Astrocyte of the cerebellum (primary cell): ENCODE measurements at regions of chr22 and their contacts with region 1.

Region 1: GRCh38 chr22:42769574-42770447 is 49.1 kb upstream of the A4GALT start:
- DNase-seq: peak; percentile 53
- H3K4me3 ChIP-seq: no peak overlapping the region
- CTCF ChIP-seq: no peak

Region 2: DNA sequence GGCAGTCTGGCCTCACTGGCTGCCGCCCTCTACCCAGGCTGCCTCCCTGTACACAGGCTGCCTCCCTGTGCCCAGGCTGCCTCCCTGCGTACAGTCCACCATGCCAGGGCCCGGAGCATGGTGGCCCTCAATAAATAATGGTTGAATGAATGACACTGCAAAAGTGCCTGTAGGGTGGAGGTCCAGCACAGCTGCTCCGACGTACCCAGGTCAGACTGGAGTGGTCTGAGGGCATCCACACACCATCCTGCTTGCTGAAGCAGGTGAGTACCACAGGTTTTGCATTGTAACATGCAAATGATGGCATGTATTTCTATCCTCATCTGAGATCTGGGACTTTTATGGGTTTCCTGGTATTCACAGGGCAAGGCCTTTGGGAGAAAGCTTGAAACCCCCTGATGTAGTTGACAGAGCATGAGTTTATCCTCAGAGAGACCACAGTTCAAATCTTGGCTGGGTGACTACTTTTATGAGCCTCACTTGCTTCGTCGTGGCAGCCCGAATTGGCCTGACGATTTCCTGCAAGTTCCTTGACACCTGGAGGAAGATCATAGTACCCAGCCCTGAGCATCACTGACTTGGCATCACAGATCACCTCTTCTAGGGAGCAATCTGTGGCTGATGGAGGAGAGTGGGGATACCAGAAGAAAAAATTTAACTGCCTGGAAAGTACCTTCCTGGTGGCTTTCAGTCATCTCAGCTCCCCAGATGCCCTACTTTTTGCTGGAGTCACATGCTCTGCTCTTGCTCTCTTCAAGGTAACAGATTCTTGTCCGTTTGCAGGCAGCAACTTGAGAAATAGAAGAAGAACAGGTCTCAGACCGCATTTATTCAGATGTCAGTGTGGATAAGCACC is 104.6 kb before region 1 on chr22:
- in situ Hi-C with region 1: loop called (anchors 5 kb)
- DNase-seq: no peak
- H3K4me3 ChIP-seq: no peak overlapping the region
- CTCF ChIP-seq: no peak

Region 3: DNA sequence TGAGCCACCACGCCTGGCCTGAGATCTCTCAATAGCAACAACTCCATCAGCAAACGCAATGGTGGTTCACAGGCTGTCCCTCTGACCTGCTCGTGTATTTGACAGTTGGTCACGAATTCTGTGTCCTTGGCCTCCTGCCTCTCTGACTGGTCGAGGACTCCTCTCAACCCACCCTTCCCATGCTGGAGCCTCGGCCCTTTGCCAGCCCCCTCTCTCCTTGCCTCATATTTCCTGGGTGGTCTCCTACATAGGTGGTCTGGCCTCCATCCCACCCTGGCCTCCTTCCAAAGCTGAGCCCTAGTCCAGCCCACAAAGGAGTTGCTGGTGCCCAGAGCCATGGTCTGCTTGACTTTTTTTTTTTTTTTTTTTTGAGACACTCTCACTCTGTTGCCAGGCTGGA is 37.7 kb before region 1 on chr22:
- in situ Hi-C with region 1: no loop called
- DNase-seq: no peak
- H3K4me3 ChIP-seq: no peak overlapping the region
- CTCF ChIP-seq: no peak

Region 4: DNA sequence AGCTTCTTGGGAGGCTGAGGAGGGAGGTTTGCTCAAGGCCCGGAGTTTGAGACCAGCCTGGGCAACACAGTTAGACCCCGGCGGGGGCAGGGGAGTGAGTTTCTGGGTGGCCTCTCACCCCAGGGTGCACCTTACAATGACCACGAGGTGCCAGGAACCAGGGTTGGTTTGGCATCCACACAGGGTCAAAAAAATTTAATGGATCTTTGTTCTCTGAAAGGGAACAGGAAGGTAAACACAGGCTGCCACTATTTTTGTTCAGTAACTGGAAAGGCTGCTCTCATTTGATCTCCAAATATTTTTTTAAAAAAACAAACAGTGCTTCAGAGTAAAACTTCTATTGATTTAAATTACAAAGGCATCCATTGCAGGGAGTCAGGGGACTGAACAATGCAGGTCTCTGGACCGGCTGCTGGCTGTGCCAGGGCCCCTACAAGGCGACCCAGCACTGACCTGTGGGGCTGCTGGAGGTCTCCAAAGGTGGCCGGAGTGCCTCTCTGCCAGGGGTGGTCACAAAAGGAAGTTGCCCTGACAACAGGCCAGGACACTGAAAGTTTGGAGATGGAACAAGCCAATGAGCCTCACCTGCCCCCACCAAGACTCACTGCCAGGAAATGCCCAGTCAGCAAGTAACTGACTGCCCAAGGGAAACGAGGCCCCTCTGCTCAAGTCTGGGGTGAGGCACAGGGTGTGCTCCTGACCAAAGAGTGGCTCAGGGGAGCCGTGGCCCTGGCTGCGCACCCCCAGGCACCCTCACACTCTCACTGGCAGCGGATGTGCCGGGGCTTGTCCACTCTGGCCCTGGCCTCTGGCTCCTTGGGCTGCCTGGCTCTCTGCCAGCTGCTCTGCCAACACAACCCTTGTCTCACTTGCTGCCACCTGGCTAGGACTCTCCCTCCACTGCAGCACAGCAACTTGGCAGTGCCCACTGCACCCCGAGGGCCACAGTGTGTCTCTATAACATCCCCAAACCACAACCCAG is 35.5 kb after region 1 on chr22:
- in situ Hi-C with region 1: no loop called
- DNase-seq: no peak
- H3K4me3 ChIP-seq: no peak overlapping the region
- CTCF ChIP-seq: no peak